ENCODE measurements at regions of chr15 and their contacts with region 1.

Region 1: DNA sequence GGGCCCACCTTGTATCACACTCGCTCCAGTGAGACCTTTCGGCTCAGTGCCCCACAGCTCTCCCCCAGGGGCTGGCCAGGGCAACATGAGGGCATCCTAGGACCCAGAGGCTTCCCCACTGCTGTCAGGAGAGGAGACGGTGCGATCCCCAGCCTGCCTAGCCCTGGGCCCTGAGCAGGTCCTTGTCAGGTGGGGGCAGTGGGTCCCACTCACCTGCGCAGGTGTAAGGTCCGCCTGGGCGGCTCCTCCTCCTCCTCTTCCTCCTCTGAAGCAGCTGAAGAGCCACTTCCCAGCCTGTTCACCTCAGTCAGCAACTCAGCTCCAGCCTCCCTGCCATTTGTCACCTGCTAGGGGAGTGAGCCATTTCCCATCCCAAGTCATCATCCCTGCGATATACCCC is 9.6 kb downstream of the KIF7 start:
- DNase-seq: no peak
- H3K27ac ChIP-seq: no peak overlapping the region
- CTCF ChIP-seq: no peak

Region 2: DNA sequence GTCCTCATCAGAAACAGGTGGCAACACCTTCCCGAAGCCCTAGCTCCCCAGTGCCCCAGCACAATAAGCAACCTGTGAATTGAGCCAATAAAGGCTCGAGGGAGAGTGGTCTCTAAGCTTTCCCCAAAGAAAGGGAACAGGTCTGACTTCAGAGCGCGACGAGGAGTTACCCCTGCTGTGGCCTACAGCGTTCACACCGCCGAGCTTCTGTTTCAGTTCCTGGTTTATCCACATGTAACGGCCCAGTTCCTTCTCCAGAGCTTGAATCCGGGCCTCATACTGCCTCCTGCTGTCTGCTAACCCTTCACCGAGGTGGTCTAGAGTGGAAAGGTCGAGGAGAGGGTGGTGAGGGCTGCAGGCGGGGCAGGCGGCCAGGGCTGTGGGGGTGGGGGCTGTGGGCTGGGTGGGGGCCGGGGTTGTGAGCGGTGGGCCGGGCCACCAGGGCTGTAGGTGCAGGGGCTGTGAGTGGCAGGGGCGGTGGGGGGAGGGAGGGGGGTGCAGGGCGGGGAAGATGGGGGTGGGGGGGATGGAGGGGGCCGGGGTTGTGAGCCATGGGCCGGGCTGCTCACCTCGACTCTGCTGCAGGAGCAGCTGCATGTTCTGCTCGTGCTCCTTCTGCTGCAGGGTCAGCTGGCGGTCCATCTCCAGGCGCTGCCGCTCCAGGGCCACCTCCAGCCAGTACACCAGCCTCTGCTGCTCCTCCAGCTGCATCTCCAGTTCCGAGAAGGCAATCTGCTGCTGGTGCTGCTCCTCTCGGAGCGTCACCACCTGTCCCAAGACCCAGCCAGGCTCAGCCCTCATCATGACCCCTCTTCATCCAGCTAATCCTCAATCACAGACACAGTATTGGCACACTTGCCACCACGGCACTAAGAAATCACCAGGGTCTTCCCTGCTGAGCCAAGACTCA is 16.6 kb before region 1 on chr15:
- CTCF ChIA-PET with region 1: no interaction called
- POLR2A ChIA-PET with region 1: no interaction called
- DNase-seq: no peak
- H3K27ac ChIP-seq: no peak overlapping the region
- CTCF ChIP-seq: no peak

Region 3: DNA sequence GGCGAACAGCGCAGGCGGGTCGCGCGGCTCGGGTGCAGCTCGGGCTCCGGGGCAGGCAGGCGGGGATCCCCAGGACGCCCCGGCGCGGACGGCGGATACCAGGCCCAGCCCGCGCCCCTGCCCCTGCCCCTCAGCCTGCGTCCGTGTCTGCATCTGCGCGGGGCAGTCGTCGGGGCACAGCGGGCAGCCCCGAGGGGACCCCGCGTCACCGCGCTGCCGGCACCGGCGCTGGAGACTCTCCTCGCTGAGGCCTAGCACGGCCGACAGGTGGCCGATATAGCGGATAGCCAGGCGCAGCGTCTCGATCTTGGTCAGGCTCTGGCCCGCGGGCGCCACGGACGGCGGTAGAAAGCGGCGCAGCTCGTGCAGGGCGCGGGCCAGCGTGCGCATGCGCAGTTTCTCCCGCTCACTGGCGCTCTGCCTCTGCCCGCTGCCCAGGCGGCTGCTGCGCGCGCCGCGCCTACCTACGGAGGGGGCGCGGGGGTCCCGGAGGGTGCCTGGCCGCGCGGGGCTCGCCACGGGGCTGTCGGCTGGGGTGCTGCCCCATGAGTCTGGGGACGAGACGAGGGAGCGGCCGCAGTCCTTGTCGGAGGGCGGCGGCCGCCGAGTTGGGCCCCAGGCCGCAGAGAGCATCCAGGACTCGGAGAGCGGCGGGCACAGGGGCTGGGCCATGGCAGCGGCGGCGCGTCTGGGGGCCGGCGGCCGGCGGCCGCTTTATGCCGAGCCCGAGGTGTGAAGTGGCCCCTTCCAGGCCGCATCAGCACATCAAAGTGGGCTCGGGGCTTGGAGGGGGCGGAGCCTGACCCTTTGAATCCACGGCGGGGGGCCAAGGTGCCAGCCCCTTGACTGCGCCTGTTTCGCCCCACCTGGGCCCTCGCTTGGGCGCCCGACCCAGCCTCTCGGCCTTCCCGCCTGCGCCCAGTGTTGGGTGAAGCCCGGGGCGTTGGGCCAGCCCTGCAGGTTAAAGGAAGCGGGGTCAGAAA is 105.2 kb after region 1 on chr15 and contains the start of gene MESP1:
- CTCF ChIA-PET with region 1: interaction called, 3 read pairs
- POLR2A ChIA-PET with region 1: interaction called, 14 read pairs
- DNase-seq: peak; percentile 94
- H3K27ac ChIP-seq: peak within 1 kb of the TSS; percentile 69
- CTCF ChIP-seq: peak; percentile 88

Region 4: DNA sequence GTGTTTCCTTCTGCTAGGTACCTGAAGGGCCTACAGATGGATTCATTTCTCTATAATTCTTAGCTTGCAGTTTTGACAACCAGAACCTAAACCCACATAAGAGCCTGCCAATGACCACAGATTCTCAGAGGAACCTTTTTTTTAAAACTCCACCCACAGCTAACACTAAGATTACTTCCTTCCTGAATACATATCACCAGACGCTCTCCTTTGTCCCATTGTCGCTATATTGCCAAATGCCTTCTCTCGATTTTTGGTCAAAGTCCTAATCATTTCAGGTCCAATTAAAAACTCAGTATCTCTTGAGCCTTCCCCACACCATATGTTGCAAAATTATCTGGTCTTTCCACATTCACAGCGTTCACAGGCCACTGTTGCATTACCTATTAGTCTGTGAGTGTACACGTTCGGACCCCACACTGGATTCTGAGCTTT is 367.8 kb after region 1 on chr15:
- CTCF ChIA-PET with region 1: no interaction called
- POLR2A ChIA-PET with region 1: no interaction called
- DNase-seq: no peak
- H3K27ac ChIP-seq: no peak overlapping the region
- CTCF ChIP-seq: no peak

Measured in RWPE1 (cell line).